ENCODE measurements at regions of chr10 and their contacts with region 1.

Region 1: GRCh38 chr10:119602241-119603095 is 5.7 kb upstream of the TIAL1 start:
- DNase-seq: peak in 1 of 2 experiments; percentile 16
- H3K4me3 ChIP-seq: no peak overlapping the region
- H3K27ac ChIP-seq: no peak overlapping the region
- H3K4me1 ChIP-seq: no peaks in the 10 kb centered on the region; the same call in 1 of the 2 replicates
- H3K27me3 ChIP-seq: no peaks in the 10 kb centered on the region
- CTCF ChIP-seq: peak; percentile 40; the same call in 1 of the 2 replicates

Region 2: DNA sequence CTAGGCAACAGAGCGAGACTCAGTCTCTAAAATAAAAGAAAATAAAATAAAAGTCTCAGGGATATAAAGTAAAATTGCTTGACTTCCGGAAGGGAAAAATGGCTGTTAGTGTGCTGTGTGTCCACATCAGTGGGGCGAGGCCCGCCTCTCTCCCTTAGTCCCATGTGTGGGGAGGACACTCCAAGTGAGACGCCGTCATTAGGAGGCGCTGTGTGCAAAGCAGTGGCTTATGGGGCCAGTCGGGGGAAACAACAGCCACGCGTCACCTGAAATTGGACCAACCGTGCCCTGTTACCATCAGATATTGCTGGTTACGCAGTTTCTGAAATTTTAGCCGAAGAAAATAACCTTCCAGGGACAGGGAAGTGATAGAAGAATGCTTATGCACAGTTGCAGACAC is 452.7 kb before region 1 on chr10:
- CTCF ChIA-PET with region 1: no interaction called
- POLR2A ChIA-PET with region 1: no interaction called
- intact Hi-C with region 1: no loop called
- DNase-seq: no peak
- H3K4me3 ChIP-seq: no peak overlapping the region
- H3K27ac ChIP-seq: no peak overlapping the region
- H3K4me1 ChIP-seq: no peaks in the 10 kb centered on the region
- H3K27me3 ChIP-seq: no peaks in the 10 kb centered on the region
- CTCF ChIP-seq: no peak

Region 3: GRCh38 chr10:119542988-119543813 is 59.3 kb before region 1 on chr10:
- CTCF ChIA-PET with region 1: no interaction called
- POLR2A ChIA-PET with region 1: no interaction called
- intact Hi-C with region 1: no loop called
- DNase-seq: peak; percentile 35 to 44
- H3K4me3 ChIP-seq: peak overlapping the region; percentile 77
- H3K27ac ChIP-seq: peak overlapping the region; percentile 32
- H3K4me1 ChIP-seq: peaks cover 31% of the 10 kb centered on the region
- H3K27me3 ChIP-seq: no peaks in the 10 kb centered on the region
- CTCF ChIP-seq: peak; percentile 62

Region 4: GRCh38 chr10:119705434-119705831 is 103.0 kb after region 1 on chr10:
- CTCF ChIA-PET with region 1: no interaction called
- POLR2A ChIA-PET with region 1: no interaction called
- intact Hi-C with region 1: no loop called
- DNase-seq: no peak
- H3K4me3 ChIP-seq: no peak overlapping the region
- H3K27ac ChIP-seq: no peak overlapping the region
- H3K4me1 ChIP-seq: no peaks in the 10 kb centered on the region
- H3K27me3 ChIP-seq: no peaks in the 10 kb centered on the region
- CTCF ChIP-seq: no peak

Region 5: DNA sequence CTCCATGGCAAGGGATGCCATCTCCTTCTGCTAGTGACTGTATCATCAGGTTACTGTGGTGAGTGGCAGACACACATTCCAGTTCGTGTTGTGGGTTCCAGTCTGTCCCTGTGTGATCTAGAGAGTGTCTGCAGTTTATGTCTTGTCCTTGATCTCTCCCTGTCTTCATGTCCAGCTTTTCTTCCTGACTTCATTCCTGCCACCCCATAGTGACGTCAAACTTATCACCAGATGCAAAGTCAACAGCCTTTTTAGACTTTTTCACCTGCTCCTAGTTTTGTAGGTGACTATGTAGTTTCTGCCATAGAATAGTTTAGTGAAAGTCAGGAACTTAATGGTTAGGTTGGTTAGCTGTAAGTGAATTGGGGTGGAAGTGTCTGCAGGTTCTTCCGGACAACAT is 690.9 kb after region 1 on chr10:
- CTCF ChIA-PET with region 1: interaction called, 11 read pairs
- POLR2A ChIA-PET with region 1: no interaction called
- intact Hi-C with region 1: no loop called
- DNase-seq: no peak
- H3K4me3 ChIP-seq: no peak overlapping the region
- H3K27ac ChIP-seq: no peak overlapping the region
- H3K4me1 ChIP-seq: no peaks in the 10 kb centered on the region
- H3K27me3 ChIP-seq: peaks cover 6% of the 10 kb centered on the region; the same call in 1 of the 2 replicates
- CTCF ChIP-seq: no peak